IMR-90 (cell line): ENCODE measurements at regions of chr3 and their contacts with region 1.

Region 1: GRCh38 chr3:148955544-148956346 is 35.6 kb upstream of the GYG1 start:
- DNase-seq: peak; percentile 95
- ATAC-seq: peak; percentile 76
- H3K4me3 ChIP-seq: no peak overlapping the region
- H3K27ac ChIP-seq: peak overlapping the region; percentile 74
- H3K4me1 ChIP-seq: peaks cover 13% of the 10 kb centered on the region
- H3K27me3 ChIP-seq: no peaks in the 10 kb centered on the region
- CTCF ChIP-seq: peak; percentile 86
- POLR2A ChIP-seq: no peak
- RAD21 ChIP-seq: peak; percentile 81

Region 2: GRCh38 chr3:148494451-148494850 is 461.3 kb before region 1 on chr3:
- CTCF ChIA-PET with region 1: no interaction called
- POLR2A ChIA-PET with region 1: no interaction called
- dilution Hi-C with region 1: no loop called
- in situ Hi-C with region 1: no loop called
- intact Hi-C with region 1: no loop called
- DNase-seq: no peak
- ATAC-seq: no peak
- H3K4me3 ChIP-seq: no peak overlapping the region
- H3K27ac ChIP-seq: no peak overlapping the region
- H3K4me1 ChIP-seq: no peaks in the 10 kb centered on the region
- H3K27me3 ChIP-seq: no peaks in the 10 kb centered on the region; the same call in 1 of the 2 replicates
- CTCF ChIP-seq: no peak
- POLR2A ChIP-seq: no peak
- RAD21 ChIP-seq: no peak

Region 3: DNA sequence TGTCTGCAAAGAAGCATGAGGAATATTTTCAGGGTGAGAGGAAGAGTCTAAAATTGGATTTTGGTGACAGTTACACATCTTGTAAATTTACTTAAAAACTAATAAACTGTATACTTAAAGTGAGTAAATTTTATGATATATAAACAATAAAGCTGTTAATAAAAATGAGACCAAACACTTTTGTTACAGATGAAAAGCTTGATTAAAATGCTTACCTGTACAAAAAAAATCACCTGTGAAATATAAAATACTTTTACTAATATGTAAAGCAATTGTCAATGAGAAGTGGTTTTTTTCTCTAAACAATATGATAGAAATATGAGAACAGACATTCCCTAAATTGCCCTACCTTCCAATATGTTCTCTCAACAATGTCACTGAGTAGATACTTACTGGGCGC is 155.3 kb before region 1 on chr3:
- CTCF ChIA-PET with region 1: no interaction called
- POLR2A ChIA-PET with region 1: no interaction called
- dilution Hi-C with region 1: no loop called
- in situ Hi-C with region 1: no loop called
- intact Hi-C with region 1: no loop called
- DNase-seq: no peak
- ATAC-seq: no peak
- H3K4me3 ChIP-seq: no peak overlapping the region
- H3K27ac ChIP-seq: no peak overlapping the region
- H3K4me1 ChIP-seq: no peaks in the 10 kb centered on the region
- H3K27me3 ChIP-seq: no peaks in the 10 kb centered on the region
- CTCF ChIP-seq: no peak
- POLR2A ChIP-seq: no peak
- RAD21 ChIP-seq: no peak

Region 4: GRCh38 chr3:148991194-148992026 is 35.7 kb after region 1 on chr3 and contains the start of gene GYG1:
- CTCF ChIA-PET with region 1: interaction called, 3 read pairs
- POLR2A ChIA-PET with region 1: interaction called, 17 read pairs
- dilution Hi-C with region 1: no loop called
- in situ Hi-C with region 1: no loop called
- intact Hi-C with region 1: no loop called
- DNase-seq: peak; percentile 80
- ATAC-seq: peak; percentile 91
- H3K4me3 ChIP-seq: peak within 1 kb of the TSS; percentile 63
- H3K27ac ChIP-seq: peak within 1 kb of the TSS; percentile 83
- H3K4me1 ChIP-seq: peaks cover 15% of the 10 kb centered on the region
- H3K27me3 ChIP-seq: no peaks in the 10 kb centered on the region
- CTCF ChIP-seq: peak; percentile 28; the same call in 1 of the 2 replicates
- POLR2A ChIP-seq: peak; percentile 89
- RAD21 ChIP-seq: peak; percentile 18; the same call in 1 of the 2 replicates
- total RNA-seq, gene GYG1: 77.8 and 90.3 TPM in 2 replicates

Region 5: DNA sequence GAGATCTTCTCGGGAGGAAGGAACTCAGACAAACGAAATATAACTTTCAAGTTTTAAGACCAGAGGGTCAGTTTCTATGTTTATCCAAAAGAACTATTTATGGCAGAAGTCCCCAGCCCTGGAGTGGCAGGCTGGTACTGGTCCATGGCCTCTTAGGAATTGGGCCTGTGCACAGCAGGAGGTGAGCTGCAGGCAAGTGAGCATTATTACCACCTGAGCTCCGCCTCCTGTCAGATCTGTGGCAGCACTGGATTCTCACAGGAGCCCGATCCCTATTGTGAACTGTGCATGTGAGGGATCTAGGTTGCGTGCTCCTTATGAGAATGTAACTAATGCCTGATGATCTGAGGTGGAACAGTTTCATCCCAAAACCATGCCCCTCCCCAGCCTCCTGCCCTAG is 159.4 kb after region 1 on chr3:
- CTCF ChIA-PET with region 1: interaction called, 8 read pairs
- POLR2A ChIA-PET with region 1: no interaction called
- dilution Hi-C with region 1: no loop called
- in situ Hi-C with region 1: loop called (anchors 5 kb)
- intact Hi-C with region 1: loop called (anchors 2 kb)
- DNase-seq: no peak
- ATAC-seq: no peak
- H3K4me3 ChIP-seq: no peak overlapping the region
- H3K27ac ChIP-seq: no peak overlapping the region
- H3K4me1 ChIP-seq: no peaks in the 10 kb centered on the region
- H3K27me3 ChIP-seq: no peaks in the 10 kb centered on the region
- CTCF ChIP-seq: no peak
- POLR2A ChIP-seq: no peak
- RAD21 ChIP-seq: no peak

Region 6: DNA sequence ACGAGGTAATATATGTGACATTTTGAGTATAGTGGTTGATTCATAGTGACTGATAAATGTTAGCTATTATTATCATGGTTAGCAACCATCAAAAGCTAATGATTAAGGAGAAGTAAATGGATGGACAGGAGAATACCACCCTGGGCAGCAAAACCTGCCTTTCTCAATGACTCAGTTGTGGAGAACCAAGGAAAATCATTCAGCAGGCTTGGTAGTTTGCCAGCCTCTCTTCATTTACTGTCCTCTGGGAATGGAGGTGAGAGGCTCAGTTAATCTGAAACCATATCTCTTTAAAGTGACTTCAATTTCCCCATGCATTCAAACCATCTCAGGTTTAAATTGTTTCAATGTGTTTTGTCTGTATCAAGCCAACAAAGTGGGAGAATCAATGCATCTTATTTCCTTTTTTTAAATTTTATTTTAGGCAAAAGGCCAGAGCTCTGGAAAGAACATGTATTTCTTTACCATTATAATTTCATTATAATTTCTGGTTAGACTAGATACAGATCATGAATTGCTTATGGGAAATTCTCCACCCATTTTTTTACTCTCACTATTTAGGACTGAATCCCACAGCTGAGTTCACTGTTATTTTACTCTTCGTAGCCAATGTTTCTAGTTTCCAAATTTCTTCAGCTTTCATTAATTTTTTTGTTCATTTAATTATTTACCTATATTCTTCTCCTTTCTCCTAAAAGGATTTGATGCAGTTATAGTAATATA is 375.0 kb after region 1 on chr3:
- CTCF ChIA-PET with region 1: interaction called, 7 read pairs
- POLR2A ChIA-PET with region 1: no interaction called
- dilution Hi-C with region 1: no loop called
- in situ Hi-C with region 1: loop called (anchors 10 kb)
- intact Hi-C with region 1: loop called (anchors 1 kb)
- DNase-seq: peak; percentile 31
- ATAC-seq: no peak
- H3K4me3 ChIP-seq: no peak overlapping the region
- H3K27ac ChIP-seq: no peak overlapping the region
- H3K4me1 ChIP-seq: peaks cover 3% of the 10 kb centered on the region
- H3K27me3 ChIP-seq: no peaks in the 10 kb centered on the region
- CTCF ChIP-seq: no peak
- POLR2A ChIP-seq: no peak
- RAD21 ChIP-seq: no peak

Region 7: GRCh38 chr3:149480325-149481017 is 524.7 kb after region 1 on chr3:
- CTCF ChIA-PET with region 1: no interaction called
- POLR2A ChIA-PET with region 1: no interaction called
- dilution Hi-C with region 1: no loop called
- in situ Hi-C with region 1: loop called (anchors 10 kb)
- intact Hi-C with region 1: loop called (anchors 5 kb)
- DNase-seq: peak; percentile 91
- ATAC-seq: peak; percentile 97
- H3K4me3 ChIP-seq: no peak overlapping the region
- H3K27ac ChIP-seq: no peak overlapping the region
- H3K4me1 ChIP-seq: peaks cover 8% of the 10 kb centered on the region
- H3K27me3 ChIP-seq: no peaks in the 10 kb centered on the region
- CTCF ChIP-seq: peak; percentile 95
- POLR2A ChIP-seq: 0 out of 2 replicates have a peak, but pooled peaks have one; percentile 41
- RAD21 ChIP-seq: peak; percentile 99